ENCODE measurements at regions of chr6 and their contacts with region 1.

Region 1: GRCh38 chr6:11172501-11173332 is 59.8 kb downstream of the NEDD9 start:
- DNase-seq: peak; percentile 87
- ATAC-seq: peak; percentile 76
- H3K4me3 Mint-ChIP-seq: no peak overlapping the region
- H3K27ac Mint-ChIP-seq: no peak overlapping the region
- H3K4me1 Mint-ChIP-seq: peaks cover 13% of the 10 kb centered on the region
- H3K27me3 Mint-ChIP-seq: no peaks in the 10 kb centered on the region

Region 2: DNA sequence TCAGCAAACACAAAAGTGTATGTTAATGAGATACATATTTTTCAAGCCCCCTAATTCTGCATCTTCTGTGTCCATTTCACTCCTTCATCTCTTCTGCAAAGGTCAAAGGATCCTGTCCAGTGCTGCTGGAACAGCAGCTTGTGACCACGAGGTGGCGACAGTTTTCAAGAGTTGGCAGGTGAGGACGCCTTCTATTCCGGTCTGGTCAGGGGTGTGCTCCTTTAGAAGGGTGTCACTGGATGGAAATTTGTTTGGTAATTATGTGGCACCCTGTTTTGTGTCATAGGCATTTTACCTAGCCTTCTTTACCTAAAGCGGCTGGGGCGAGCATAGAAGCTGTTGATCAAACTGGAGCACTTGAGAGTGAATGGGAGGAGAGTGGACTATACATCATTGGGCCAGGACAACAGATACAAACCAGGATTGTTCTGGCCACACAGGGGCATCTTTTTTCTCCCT is 28.3 kb before region 1 on chr6:
- CTCF ChIA-PET with region 1: interaction called, 4 read pairs
- POLR2A ChIA-PET with region 1: no interaction called
- intact Hi-C with region 1: loop called (anchors 1 kb)
- DNase-seq: peak; percentile 89
- ATAC-seq: peak; percentile 94
- H3K4me3 Mint-ChIP-seq: no peak overlapping the region
- H3K27ac Mint-ChIP-seq: no peak overlapping the region
- H3K4me1 Mint-ChIP-seq: peaks cover 7% of the 10 kb centered on the region
- H3K27me3 Mint-ChIP-seq: no peaks in the 10 kb centered on the region

Region 3: GRCh38 chr6:11198663-11199603 is 26.2 kb after region 1 on chr6:
- CTCF ChIA-PET with region 1: interaction called, 11 read pairs
- POLR2A ChIA-PET with region 1: no interaction called
- intact Hi-C with region 1: no loop called
- DNase-seq: peak; percentile 47
- ATAC-seq: peak; percentile 81
- H3K4me3 Mint-ChIP-seq: no peak overlapping the region
- H3K27ac Mint-ChIP-seq: peak overlapping the region; percentile 74
- H3K4me1 Mint-ChIP-seq: peaks cover 45% of the 10 kb centered on the region
- H3K27me3 Mint-ChIP-seq: no peaks in the 10 kb centered on the region

Region 4: DNA sequence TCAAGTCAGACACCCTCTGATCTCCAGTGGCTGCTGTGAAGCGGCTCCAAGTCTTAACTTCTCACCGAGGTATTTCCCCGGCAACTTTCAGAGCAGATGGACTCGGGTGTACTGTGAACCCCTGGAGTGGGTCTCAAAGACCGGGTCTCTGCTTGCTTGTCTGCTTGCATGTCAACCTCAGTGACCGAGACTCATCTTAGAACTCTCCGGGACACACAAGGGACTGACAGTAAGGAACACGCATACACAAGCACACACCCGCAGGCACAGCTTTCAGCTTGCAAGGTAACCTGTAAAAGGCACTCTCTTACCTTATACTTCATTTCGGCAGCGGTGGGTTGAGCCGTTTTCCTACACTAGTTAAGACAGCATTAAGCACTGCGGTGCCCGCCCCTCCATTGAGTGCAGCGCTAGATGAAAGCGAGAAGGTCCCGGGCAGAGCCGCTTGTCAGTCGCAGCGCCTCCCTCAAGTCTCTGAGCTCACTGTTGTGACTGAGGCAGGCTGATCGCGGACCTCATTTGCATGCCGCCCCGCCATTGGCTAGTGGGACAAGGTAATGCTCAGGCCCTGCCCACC is 59.6 kb after region 1 on chr6 and contains the start of gene NEDD9:
- CTCF ChIA-PET with region 1: interaction called, 3 read pairs
- POLR2A ChIA-PET with region 1: no interaction called
- intact Hi-C with region 1: loop called (anchors 1 to 5 kb)
- DNase-seq: peak; percentile 97
- ATAC-seq: peak; percentile 96
- H3K4me3 Mint-ChIP-seq: peak within 1 kb of the TSS; percentile 81
- H3K27ac Mint-ChIP-seq: peak within 1 kb of the TSS; percentile 95
- H3K4me1 Mint-ChIP-seq: peaks cover 65% of the 10 kb centered on the region
- H3K27me3 Mint-ChIP-seq: no peaks in the 10 kb centered on the region
- total RNA-seq, gene NEDD9: 23.6 to 27.3 TPM

Measured in activated CD4-positive, alpha-beta T cell treated with anti-CD3 and anti-CD28 coated beads for 36 hours (primary cell).